Common myeloid progenitor, CD34-positive (primary cell): ENCODE measurements at regions of chr10 and their contacts with region 1.

Region 1: GRCh38 chr10:128268015-128268722 is 141.9 kb upstream of the MKI67 start:
- DNase-seq: peak; percentile 53 to 66 (median 66)
- H3K4me3 ChIP-seq: no peak overlapping the region
- H3K27ac ChIP-seq: no peak overlapping the region
- H3K4me1 ChIP-seq: peaks cover 0 to 2% (median 0%) of the 10 kb centered on the region in 4 experiments
- H3K27me3 ChIP-seq: peaks cover 11 to 50% (median 17%) of the 10 kb centered on the region in 5 experiments

Region 2: GRCh38 chr10:128280271-128280670 is 12.1 kb after region 1 on chr10:
- CTCF ChIA-PET with region 1: interaction called, 12 read pairs
- POLR2A ChIA-PET with region 1: no interaction called
- DNase-seq: peak in 1 of 3 donors; percentile 25
- H3K4me3 ChIP-seq: no peak overlapping the region
- H3K27ac ChIP-seq: no peak overlapping the region
- H3K4me1 ChIP-seq: peaks cover 2 to 28% (median 21%) of the 10 kb centered on the region in 4 experiments
- H3K27me3 ChIP-seq: peaks cover 2 to 18% (median 8%) of the 10 kb centered on the region in 5 experiments

Region 3: DNA sequence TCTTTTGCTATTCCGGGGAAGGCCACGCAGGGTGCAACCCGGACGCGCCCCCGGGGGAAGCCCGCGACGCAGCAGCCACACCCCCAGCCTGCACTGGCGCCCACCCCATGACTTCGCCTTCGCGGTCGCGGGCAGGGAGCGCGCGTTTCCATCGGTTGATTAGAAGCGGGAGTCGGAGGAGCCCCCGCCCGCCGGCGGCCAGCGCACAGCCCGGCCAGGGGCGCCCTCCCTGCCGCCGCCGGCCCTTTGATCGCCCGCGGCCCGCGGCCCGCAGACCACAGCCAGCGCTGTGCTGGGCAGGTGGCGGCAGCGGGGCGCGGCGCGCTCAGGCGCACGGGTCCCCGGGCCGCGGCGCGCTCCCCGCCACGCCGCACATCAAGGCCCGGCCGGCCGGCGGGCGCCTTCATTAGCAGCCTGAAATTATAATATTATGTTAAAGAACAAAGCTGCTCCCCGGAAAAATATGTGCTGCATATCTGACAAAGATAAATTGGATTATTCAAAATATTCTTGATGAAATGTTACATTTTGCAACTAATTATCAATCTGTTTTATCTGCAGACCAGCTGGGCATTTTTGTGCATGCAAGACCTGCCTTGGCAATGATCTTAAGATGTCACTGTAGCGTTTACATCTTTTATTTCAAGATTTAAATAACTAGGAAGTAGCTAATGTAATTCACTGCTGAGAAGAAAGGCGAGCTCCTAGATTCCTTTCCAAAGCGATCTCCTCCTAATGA is 18.8 kb after region 1 on chr10:
- CTCF ChIA-PET with region 1: interaction called, 13 read pairs
- POLR2A ChIA-PET with region 1: no interaction called
- DNase-seq: peak in 2 of 3 donors; percentile 27 to 52
- H3K4me3 ChIP-seq: peak overlapping the region in 3 of 7 experiments; percentile 7 to 45 (median 26)
- H3K27ac ChIP-seq: no peak overlapping the region
- H3K4me1 ChIP-seq: peaks cover 0 to 7% (median 3%) of the 10 kb centered on the region in 4 experiments
- H3K27me3 ChIP-seq: peaks cover 14 to 64% (median 30%) of the 10 kb centered on the region in 5 experiments

Region 4: GRCh38 chr10:128530301-128530700 is 262.1 kb after region 1 on chr10:
- CTCF ChIA-PET with region 1: interaction called, 77 read pairs
- POLR2A ChIA-PET with region 1: no interaction called
- DNase-seq: peak; percentile 30 to 56 (median 35)
- H3K4me3 ChIP-seq: no peak overlapping the region
- H3K27ac ChIP-seq: no peak overlapping the region
- H3K4me1 ChIP-seq: no peaks in the 10 kb centered on the region
- H3K27me3 ChIP-seq: peaks cover 4 to 42% (median 19%) of the 10 kb centered on the region in 5 experiments